ENCODE measurements at regions of chr5 and their contacts with region 1.

Region 1: DNA sequence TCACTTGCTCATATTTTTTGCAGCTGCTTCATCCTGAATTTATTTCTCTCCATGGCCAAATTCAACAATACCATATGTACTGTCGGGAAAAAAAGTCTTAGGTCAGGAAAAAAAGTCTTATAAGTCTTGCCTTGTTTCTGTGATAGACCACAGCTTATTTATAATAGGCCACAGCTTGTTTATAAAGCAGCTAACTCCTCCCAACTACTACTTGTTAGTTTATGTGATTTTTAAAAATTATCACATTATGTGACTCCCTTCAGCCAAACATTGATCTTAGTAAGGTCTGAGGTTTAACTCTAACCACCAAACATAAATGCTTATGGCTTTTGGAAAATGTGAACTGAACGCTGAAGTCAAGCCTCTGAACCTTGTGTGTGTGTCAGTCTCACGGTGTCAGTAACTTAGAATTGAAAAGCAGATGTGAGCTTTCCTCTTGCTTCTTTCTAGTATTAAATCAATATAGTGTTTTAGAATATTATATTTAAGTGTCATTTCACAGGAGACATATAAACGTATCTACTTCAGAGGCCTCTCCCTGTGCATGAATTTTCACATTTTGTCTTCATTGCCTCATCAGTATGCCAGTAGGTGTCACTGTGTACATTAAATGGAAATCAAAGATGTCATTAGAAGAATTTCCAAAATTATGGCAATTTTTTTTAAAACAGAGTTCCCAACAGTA is 51.3 kb downstream of the SNX24 start:
- DNase-seq: no peak
- H3K4me3 ChIP-seq: peak overlapping the region in 1 of 2 experiments; percentile 49; a peak in 1 of 4 replicates
- H3K27ac ChIP-seq: no peak overlapping the region
- H3K4me1 ChIP-seq: peaks cover 0 to 6% of the 10 kb centered on the region in 2 experiments; a peak in 1 of 4 replicates
- H3K27me3 ChIP-seq: no peaks in the 10 kb centered on the region
- CTCF ChIP-seq: peak; percentile 83
- EP300 ChIP-seq: no peak
- RAD21 ChIP-seq: peak; percentile 77

Region 2: GRCh38 chr5:122653087-122653959 is 243.4 kb before region 1 on chr5:
- CTCF ChIA-PET with region 1: no interaction called
- POLR2A ChIA-PET with region 1: no interaction called
- DNase-seq: no peak
- H3K4me3 ChIP-seq: no peak overlapping the region
- H3K27ac ChIP-seq: peak overlapping the region in 1 of 2 experiments; percentile 39; a peak in 1 of 4 replicates
- H3K4me1 ChIP-seq: no peaks in the 10 kb centered on the region; a peak in 1 of 4 replicates
- H3K27me3 ChIP-seq: no peaks in the 10 kb centered on the region
- CTCF ChIP-seq: no peak
- EP300 ChIP-seq: no peak
- RAD21 ChIP-seq: no peak

Region 3: DNA sequence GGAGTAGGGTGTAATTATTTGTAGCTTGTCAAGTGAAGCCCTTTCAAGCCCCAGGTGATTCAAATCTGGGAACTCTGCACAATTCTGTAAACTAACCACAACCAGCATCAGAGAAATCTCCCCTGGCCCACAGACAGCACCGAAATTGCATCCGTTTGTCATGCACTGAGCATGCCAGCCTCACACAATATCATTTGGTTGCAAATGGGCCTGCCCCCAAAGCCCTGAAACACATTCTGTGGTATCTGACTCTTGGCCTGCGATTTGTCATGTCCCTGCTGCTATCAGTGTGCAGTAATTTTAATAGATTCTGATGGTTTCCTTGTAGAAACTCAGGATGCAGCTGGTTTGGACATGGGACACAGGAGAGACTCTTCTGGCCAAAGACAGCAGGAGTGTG is 16.0 kb before region 1 on chr5:
- CTCF ChIA-PET with region 1: interaction called, 11 read pairs
- POLR2A ChIA-PET with region 1: no interaction called
- DNase-seq: peak; percentile 51
- H3K4me3 ChIP-seq: no peak overlapping the region
- H3K27ac ChIP-seq: peak overlapping the region; percentile 25 to 58; a peak in 2 of 4 replicates
- H3K4me1 ChIP-seq: peaks cover 5 to 24% of the 10 kb centered on the region in 2 experiments; a peak in 2 of 4 replicates
- H3K27me3 ChIP-seq: no peaks in the 10 kb centered on the region
- CTCF ChIP-seq: no peak
- EP300 ChIP-seq: peak in 1 of 2 experiments; percentile 70; a peak in 2 of 4 replicates
- RAD21 ChIP-seq: no peak

Measured in SK-N-SH (cell line).